ENCODE measurements at regions of chr1 and their contacts with region 1.

Region 1: DNA sequence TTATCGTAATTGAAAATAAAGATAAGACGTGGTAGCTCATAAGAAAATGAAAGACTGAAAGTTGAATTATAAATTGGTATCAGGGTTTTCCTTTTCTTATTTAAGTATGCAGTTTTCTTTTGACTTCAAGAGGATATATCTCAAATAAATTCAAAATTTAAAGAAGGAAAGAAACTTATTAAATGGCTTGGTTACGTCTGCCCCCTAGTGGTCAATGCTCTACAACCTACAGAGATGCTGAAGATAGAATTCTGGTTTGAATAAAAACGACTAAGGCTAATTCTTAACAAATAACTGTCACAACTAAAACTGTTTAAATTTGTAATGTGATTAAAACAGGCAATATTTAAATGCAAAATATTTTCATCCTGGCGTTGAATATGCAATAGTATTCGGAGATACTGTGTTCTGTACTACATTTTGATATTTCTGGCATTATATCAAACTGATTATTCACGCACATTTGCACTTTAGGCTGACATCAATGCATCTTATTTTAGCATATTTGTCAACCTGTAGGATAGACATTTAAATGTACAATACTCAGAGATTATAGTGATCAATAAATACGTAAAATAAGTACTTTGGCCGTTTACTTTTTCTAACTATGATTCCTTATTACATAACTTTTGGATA is 26.8 kb downstream of the IFI44 start:
- DNase-seq: peak; percentile 76
- H3K4me3 ChIP-seq: no peak overlapping the region
- H3K27ac ChIP-seq: no peak overlapping the region
- H3K4me1 ChIP-seq: no peaks in the 10 kb centered on the region
- H3K27me3 ChIP-seq: no peaks in the 10 kb centered on the region
- CTCF ChIP-seq: peak; percentile 91

Region 2: GRCh38 chr1:78126506-78126905 is 550.0 kb before region 1 on chr1:
- CTCF ChIA-PET with region 1: no interaction called
- POLR2A ChIA-PET with region 1: no interaction called
- intact Hi-C with region 1: loop called (anchors 1 kb)
- DNase-seq: no peak
- H3K4me3 ChIP-seq: no peak overlapping the region
- H3K27ac ChIP-seq: no peak overlapping the region
- H3K4me1 ChIP-seq: no peaks in the 10 kb centered on the region
- H3K27me3 ChIP-seq: no peaks in the 10 kb centered on the region
- CTCF ChIP-seq: no peak

Measured in A673 (cell line).